Sciatic nerve (tissue), 2 donors: ENCODE measurements at regions of chr14 and their contacts with region 1.

Region 1: DNA sequence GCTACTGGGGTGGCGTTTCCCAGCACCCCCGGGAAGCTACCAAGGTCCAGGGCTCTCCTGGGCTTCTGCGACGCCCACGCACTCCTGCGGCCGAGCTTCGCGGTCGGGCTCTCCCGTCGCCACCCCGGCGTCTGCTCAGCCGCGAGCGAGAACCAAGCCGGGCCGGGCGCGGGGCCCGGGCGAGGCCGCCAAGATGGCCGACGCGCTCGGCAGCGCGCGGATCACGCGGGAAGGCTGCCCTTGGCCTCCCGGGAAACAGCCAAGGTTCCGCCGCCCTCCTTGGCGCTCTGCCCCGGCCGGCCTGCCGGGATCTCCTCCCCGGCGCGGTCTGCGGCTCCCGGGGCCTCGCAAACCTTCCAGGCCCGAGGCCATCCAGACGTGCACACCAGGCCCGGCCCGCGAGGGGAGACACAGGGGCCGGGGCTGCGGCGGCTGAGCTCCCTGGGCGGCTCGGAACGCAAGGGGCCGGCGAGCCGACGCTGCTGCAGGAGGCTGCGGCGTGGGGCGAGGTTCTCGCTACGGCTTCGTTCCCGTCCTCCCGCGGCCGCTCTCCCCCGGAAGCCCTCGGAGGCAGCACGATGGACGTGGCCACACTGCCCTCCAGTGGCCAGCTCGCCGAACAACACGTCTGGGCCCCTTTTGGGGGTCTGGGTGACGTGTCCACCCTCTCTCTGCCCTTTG is 23.5 kb upstream of the ZFP36L1 start:
- DNase-seq: peak; percentile 95
- ATAC-seq: peak; percentile 87

Region 2: GRCh38 chr14:67933266-67933665 is 883.1 kb before region 1 on chr14:
- intact Hi-C with region 1: loop called (anchors 2 kb)
- DNase-seq: no peak
- ATAC-seq: peak; percentile 38

Region 3: DNA sequence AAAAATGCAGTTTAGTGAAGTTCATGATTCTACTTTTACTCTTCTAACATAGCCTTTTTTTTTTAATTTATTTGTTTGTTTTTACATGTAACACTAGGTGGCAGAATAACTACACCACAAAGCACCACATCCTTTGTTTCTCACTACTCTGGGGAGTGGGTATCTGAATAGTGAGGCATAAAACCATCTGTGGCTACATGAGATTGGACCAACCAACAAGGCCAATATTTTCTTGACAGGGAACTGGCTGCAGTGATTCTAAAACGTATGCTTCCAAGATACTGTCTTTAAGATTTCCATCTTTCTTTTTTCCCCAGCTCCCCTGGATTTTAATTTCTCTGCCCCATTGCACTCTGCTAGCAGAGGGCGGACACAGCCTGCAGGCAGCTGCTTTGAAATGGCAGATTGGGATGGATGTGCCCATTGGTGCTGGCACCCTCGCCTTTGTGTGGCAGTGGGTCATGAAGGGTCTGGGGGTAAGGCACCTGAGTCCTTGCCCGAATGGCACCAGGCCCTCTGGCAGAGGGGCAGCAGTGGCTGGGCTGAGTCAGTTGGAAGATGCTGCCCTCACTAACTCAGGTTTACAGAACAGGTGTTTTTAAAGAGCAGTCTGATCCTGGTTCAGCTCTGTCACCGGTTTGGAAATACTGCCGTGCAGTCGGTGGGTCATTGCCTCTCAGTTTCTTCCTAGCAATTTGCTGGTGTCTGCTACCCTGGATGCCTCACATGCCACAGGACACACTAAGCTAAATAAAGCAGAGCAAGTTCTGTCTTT is 567.7 kb before region 1 on chr14:
- intact Hi-C with region 1: loop called (anchors 5 kb)
- DNase-seq: peak; percentile 64
- ATAC-seq: peak; percentile 85

Region 4: GRCh38 chr14:69090187-69090789 is 273.9 kb after region 1 on chr14:
- intact Hi-C with region 1: no loop called
- DNase-seq: no peak
- ATAC-seq: no peak

Region 5: DNA sequence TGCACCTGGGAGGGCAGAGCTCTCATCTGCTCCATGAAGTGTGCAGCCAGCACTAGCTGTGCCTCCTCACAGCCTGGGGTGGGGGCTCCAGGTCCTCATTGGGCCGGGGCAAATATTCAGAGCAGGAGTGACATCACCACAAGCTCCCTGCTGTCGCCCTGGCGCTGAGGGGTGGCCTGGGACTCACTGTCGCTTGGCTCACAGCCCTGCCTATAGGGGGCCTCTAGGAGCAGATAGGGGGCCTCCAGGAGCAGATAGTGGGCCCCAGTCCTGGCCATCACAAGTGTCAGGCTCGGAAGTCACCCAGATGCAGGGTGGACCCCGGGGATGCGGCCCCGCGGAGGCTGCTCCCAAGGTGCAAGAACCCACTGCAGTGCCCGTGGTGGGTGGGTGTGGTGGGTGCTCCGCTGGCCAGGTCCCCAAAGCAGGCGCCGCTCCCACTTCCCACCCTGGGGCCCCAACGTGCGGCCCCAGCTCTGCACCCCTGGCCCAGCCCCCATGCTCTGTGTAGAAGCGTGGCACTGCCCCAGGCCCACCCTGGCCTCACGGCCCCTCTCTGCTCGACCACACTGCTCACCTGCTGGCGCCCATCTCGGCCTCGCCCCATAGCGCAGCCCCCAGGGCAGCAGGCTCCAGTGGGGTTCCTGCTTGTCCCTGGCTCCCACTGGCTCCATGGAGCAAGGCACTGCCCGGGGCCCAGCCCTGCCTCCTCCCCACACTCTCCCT is 1582.5 kb after region 1 on chr14:
- intact Hi-C with region 1: no loop called
- DNase-seq: no peak
- ATAC-seq: no peak